Right ventricle myocardium inferior (tissue), 1 donor: ENCODE measurements at regions of chr2 and their contacts with region 1.

Region 1: GRCh38 chr2:177242116-177242987 is 22.2 kb downstream of the NFE2L2 start:
- DNase-seq: no peak
- ATAC-seq: peak; percentile 71

Region 2: DNA sequence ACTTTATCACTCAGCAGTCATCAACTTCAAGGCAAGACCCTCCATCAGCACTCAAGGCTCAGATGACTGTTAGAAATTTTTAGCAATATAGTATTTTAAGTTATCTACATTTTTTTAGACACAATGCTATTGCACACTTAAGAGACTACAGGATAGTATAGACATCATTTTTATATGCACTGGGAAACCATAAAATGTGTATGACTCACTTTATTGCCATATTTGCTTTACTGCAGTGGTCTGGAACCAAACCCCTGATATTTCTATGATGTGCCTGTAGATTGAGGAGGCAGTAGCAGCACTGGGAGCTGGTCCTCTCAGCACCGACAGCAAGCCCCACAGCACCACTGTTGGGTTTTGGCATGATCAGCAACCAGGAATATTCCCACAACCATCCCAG is 294.6 kb before region 1 on chr2:
- intact Hi-C with region 1: no loop called
- DNase-seq: no peak
- ATAC-seq: no peak

Region 3: GRCh38 chr2:177212106-177212890 is 30.1 kb before region 1 on chr2 and contains the start of gene HNRNPA3:
- intact Hi-C with region 1: loop called (anchors 5 kb)
- DNase-seq: peak; percentile 99
- ATAC-seq: peak; percentile 96
- total RNA-seq, gene HNRNPA3: 66.6 TPM

Region 4: DNA sequence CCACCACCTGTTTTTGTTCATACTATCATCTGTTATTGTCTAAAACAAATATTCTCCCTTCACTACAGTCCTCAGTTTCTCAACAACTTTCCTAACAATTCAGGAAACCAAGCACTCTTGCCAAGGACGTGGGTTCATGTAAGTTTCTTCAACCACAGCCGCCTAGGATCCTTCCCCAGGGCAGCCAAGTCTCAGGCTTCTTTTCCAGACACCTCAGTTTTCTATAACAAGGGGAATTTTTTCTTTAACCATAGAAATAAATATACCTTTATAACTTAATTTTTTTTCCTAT is 110.8 kb after region 1 on chr2:
- intact Hi-C with region 1: no loop called
- DNase-seq: no peak
- ATAC-seq: peak; percentile 39